Activated T-helper 2 cell treated with anti-CD3 and anti-CD28 coated beads, Interferon-gamma antibody, Interleukin-2, Interleukin-4, amounts not matched to agents 10 μg/mL and 5 μg/mL and 100 μg/mL, durations not matched to agents 14 hours and 24 hours and 36 hours (primary cell): ENCODE measurements at regions of chr3 and their contacts with region 1.

Region 1: DNA sequence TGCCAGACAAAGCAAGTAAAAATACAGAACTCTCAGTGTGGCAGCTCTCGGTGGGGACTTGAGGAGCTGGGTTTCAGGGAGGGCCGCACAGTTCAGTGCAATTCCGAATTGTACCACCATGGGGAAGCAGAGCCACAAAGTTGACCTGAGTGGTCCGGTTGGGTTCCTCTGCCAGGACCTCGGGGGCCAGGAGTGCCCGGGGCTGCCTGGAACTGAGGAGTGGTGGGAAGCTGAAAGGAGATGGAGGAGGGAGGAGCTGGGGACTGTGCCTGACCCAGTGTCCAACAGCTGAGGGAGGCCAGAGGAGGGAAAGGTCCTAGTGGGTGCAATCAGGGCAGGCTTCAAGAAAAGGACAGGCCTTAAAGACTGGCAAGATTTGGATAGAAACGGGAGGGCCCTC is 32.2 kb upstream of the TRH start:
- DNase-seq: no peak
- H3K4me3 Mint-ChIP-seq: no peak overlapping the region
- H3K27ac Mint-ChIP-seq: no peak overlapping the region
- H3K4me1 Mint-ChIP-seq: no peaks in the 10 kb centered on the region
- H3K27me3 Mint-ChIP-seq: peaks cover 9% of the 10 kb centered on the region

Region 2: DNA sequence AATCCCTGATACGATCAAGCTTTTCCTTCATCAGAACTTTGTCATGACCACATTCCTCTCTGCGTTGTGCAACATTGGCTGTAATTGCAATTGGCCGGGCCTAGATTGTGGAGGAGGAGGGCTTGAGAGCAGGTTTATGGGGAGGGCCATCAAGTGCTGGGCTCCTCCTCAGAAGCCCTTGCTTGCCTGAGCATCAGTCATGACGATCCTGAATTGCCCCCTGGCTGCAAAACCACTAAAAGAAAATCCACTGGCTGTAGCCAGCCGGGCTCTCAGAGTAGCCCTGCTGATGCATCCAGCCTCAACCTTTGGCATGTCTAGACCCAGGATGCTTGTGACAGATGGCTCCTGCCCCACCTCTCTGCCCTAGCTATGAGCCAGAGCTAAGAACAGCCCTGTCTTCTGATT is 18.8 kb after region 1 on chr3:
- intact Hi-C with region 1: no loop called
- DNase-seq: no peak
- H3K4me3 Mint-ChIP-seq: no peak overlapping the region
- H3K27ac Mint-ChIP-seq: no peak overlapping the region
- H3K4me1 Mint-ChIP-seq: no peaks in the 10 kb centered on the region
- H3K27me3 Mint-ChIP-seq: peaks cover 5% of the 10 kb centered on the region

Region 3: GRCh38 chr3:130014526-130014925 is 72.2 kb after region 1 on chr3:
- intact Hi-C with region 1: loop called (anchors 10 kb)
- DNase-seq: no peak
- H3K4me3 Mint-ChIP-seq: no peak overlapping the region
- H3K27ac Mint-ChIP-seq: no peak overlapping the region
- H3K4me1 Mint-ChIP-seq: no peaks in the 10 kb centered on the region
- H3K27me3 Mint-ChIP-seq: peaks cover 5% of the 10 kb centered on the region

Region 4: GRCh38 chr3:130073582-130073981 is 131.3 kb after region 1 on chr3:
- intact Hi-C with region 1: no loop called
- DNase-seq: no peak
- H3K4me3 Mint-ChIP-seq: no peak overlapping the region
- H3K27ac Mint-ChIP-seq: no peak overlapping the region
- H3K4me1 Mint-ChIP-seq: no peaks in the 10 kb centered on the region
- H3K27me3 Mint-ChIP-seq: no peaks in the 10 kb centered on the region

Region 5: GRCh38 chr3:130093741-130094391 is 151.6 kb after region 1 on chr3:
- intact Hi-C with region 1: loop called (anchors 10 kb)
- DNase-seq: peak; percentile 36
- H3K4me3 Mint-ChIP-seq: peak overlapping the region; percentile 13
- H3K27ac Mint-ChIP-seq: peak overlapping the region; percentile 21
- H3K4me1 Mint-ChIP-seq: peaks cover 32% of the 10 kb centered on the region
- H3K27me3 Mint-ChIP-seq: no peaks in the 10 kb centered on the region